CD4-positive, alpha-beta memory T cell (primary cell): ENCODE measurements at regions of chr2 and their contacts with region 1.

Region 1: GRCh38 chr2:102154360-102154759 is 11.8 kb downstream of the IL1R1 start:
- DNase-seq: no peak
- H3K4me3 ChIP-seq: no peak overlapping the region
- H3K4me3 Mint-ChIP-seq: no peak overlapping the region
- H3K27ac ChIP-seq: no peak overlapping the region
- H3K27ac Mint-ChIP-seq: peak overlapping the region in 1 of 7 donors; percentile 67
- H3K4me1 ChIP-seq: no peaks in the 10 kb centered on the region
- H3K4me1 Mint-ChIP-seq: no peaks in the 10 kb centered on the region
- H3K27me3 ChIP-seq: no peaks in the 10 kb centered on the region
- H3K27me3 Mint-ChIP-seq: no peaks in the 10 kb centered on the region

Region 2: GRCh38 chr2:101818531-101819451 is 335.6 kb before region 1 on chr2:
- CTCF ChIA-PET with region 1: no interaction called
- POLR2A ChIA-PET with region 1: no interaction called
- intact Hi-C with region 1: no loop called
- DNase-seq: no peak
- H3K4me3 ChIP-seq: no peak overlapping the region
- H3K4me3 Mint-ChIP-seq: peak overlapping the region in 3 of 8 donors; percentile 6 to 11 (median 6)
- H3K27ac ChIP-seq: no peak overlapping the region
- H3K27ac Mint-ChIP-seq: peak overlapping the region; percentile 20 to 88 (median 63)
- H3K4me1 ChIP-seq: peaks cover 80% of the 10 kb centered on the region
- H3K4me1 Mint-ChIP-seq: peaks cover 61 to 92% (median 75%) of the 10 kb centered on the region in 4 donors
- H3K27me3 ChIP-seq: no peaks in the 10 kb centered on the region
- H3K27me3 Mint-ChIP-seq: no peaks in the 10 kb centered on the region

Region 3: GRCh38 chr2:102141970-102142828 is 12.2 kb before region 1 on chr2 and contains the start of gene IL1R1:
- CTCF ChIA-PET with region 1: no interaction called
- POLR2A ChIA-PET with region 1: no interaction called
- intact Hi-C with region 1: no loop called
- DNase-seq: no peak
- H3K4me3 ChIP-seq: no peak within 1 kb of the TSS
- H3K4me3 Mint-ChIP-seq: peak within 1 kb of the TSS; percentile 74 to 86 (median 78)
- H3K27ac ChIP-seq: no peak within 1 kb of the TSS
- H3K27ac Mint-ChIP-seq: peak within 1 kb of the TSS in 5 of 7 donors; percentile 3 to 80 (median 61)
- H3K4me1 ChIP-seq: peaks cover 17% of the 10 kb centered on the region
- H3K4me1 Mint-ChIP-seq: peaks cover 14 to 31% (median 24%) of the 10 kb centered on the region in 4 donors
- H3K27me3 ChIP-seq: no peaks in the 10 kb centered on the region
- H3K27me3 Mint-ChIP-seq: peaks cover 24 to 27% of the 10 kb centered on the region in 2 donors
- total RNA-seq, gene IL1R1: 0.86 to 1.0 TPM

Region 4: GRCh38 chr2:102166189-102166845 is 12.0 kb after region 1 on chr2:
- CTCF ChIA-PET with region 1: interaction called, 10 read pairs
- POLR2A ChIA-PET with region 1: no interaction called
- intact Hi-C with region 1: no loop called
- DNase-seq: no peak
- H3K4me3 ChIP-seq: no peak overlapping the region
- H3K4me3 Mint-ChIP-seq: no peak overlapping the region
- H3K27ac ChIP-seq: no peak overlapping the region
- H3K27ac Mint-ChIP-seq: no peak overlapping the region
- H3K4me1 ChIP-seq: no peaks in the 10 kb centered on the region
- H3K4me1 Mint-ChIP-seq: no peaks in the 10 kb centered on the region
- H3K27me3 ChIP-seq: no peaks in the 10 kb centered on the region
- H3K27me3 Mint-ChIP-seq: no peaks in the 10 kb centered on the region

Region 5: DNA sequence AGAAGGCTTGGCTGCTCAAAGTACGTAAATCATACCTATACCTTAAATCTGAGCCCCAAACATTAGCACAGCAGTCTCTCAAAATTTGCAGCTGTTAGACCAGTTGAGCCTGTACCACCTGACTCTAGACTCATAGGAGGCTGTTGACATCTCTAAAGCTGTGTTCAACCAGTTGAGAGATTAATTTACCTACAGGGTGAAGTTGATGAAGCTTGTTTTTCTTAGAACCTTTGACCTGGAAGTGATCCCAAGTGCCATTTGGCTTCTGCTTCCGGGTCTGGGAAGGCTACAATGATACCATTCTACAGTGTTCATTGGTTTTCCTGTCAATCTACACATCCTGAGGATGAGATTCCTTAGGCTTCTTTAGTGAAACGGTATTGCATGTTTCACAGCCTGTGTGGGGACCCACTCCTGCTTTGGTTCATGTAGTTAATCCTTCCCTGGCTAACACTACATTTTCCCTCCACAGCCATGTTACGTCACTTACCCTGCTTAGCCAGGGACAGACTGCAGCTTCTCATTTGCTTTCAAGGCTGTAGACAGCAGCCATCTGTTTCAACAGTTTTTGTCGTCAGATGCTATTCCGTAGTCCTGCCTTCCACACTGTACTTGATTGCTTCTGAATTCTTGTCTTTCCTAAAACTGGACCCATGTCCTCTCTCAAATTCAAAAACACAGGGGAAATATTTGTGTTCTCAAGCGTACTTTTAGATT is 27.7 kb after region 1 on chr2:
- CTCF ChIA-PET with region 1: no interaction called
- POLR2A ChIA-PET with region 1: no interaction called
- intact Hi-C with region 1: no loop called
- DNase-seq: no peak
- H3K4me3 ChIP-seq: no peak overlapping the region
- H3K4me3 Mint-ChIP-seq: no peak overlapping the region
- H3K27ac ChIP-seq: no peak overlapping the region
- H3K27ac Mint-ChIP-seq: no peak overlapping the region
- H3K4me1 ChIP-seq: peaks cover 9% of the 10 kb centered on the region
- H3K4me1 Mint-ChIP-seq: peaks cover 5 to 14% (median 9%) of the 10 kb centered on the region in 4 donors
- H3K27me3 ChIP-seq: no peaks in the 10 kb centered on the region
- H3K27me3 Mint-ChIP-seq: peaks cover 0 to 9% of the 10 kb centered on the region in 2 donors